Common myeloid progenitor, CD34-positive (primary cell): ENCODE measurements at regions of chr19 and their contacts with region 1.

Region 1: GRCh38 chr19:41563854-41564514 is 12.0 kb upstream of the CEACAM21 start:
- DNase-seq: peak in 2 of 3 donors; percentile 56 to 65
- H3K4me3 ChIP-seq: peak overlapping the region in 5 of 7 experiments; percentile 41 to 91 (median 77)
- H3K27ac ChIP-seq: no peak overlapping the region
- H3K4me1 ChIP-seq: peaks cover 3 to 45% (median 30%) of the 10 kb centered on the region in 4 experiments
- H3K27me3 ChIP-seq: peaks cover 0 to 6% (median 0%) of the 10 kb centered on the region in 5 experiments

Region 2: DNA sequence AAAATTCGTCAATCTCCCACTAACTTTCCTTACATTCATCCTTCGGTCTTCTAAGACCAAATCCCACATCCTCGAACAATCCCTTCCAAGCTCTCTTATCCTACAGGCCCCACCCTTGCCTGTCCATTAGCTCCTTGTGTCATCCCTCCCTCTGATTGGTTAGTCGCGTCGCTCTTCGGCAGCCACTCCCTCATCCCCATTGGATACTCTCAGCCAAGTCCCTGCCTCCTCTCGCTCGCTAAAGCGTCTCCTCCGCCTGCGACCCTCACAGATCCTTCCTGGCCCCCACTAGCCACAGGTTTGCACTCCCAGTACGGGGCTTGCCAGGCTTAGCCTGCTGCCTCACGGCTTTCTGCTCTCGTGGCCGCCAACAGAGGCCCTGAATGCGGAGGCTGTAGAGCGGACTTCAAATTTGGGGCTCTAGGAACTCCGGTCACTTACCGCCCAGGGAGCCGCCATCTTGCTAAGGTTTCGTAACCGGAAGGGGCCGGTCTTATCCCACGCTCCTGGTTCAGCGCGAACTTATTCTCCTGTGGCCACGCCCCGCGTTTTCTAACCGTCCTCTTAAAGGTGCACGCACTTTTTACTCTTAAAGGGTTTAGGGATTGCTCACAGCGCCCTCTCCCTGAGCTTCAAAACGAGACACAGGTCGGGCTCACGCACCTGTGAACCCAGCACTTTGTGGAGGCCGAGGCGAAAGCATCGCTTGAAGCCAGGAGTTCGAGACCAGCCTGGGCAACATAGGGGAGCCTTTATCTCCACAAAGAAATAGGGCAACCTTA is 124.4 kb before region 1 on chr19 and contains the start of gene DMAC2:
- CTCF ChIA-PET with region 1: interaction called, 113 read pairs
- POLR2A ChIA-PET with region 1: no interaction called
- DNase-seq: peak; percentile 97 to 98 (median 97)
- H3K4me3 ChIP-seq: peak within 1 kb of the TSS; percentile 71 to 100 (median 93)
- H3K27ac ChIP-seq: peak within 1 kb of the TSS; percentile 80 to 88
- H3K4me1 ChIP-seq: peaks cover 4 to 22% (median 13%) of the 10 kb centered on the region in 4 experiments
- H3K27me3 ChIP-seq: no peaks in the 10 kb centered on the region

Region 3: GRCh38 chr19:41449079-41449864 is 114.7 kb before region 1 on chr19:
- CTCF ChIA-PET with region 1: interaction called, 113 read pairs
- POLR2A ChIA-PET with region 1: no interaction called
- DNase-seq: peak; percentile 50 to 68 (median 65)
- H3K4me3 ChIP-seq: peak overlapping the region in 6 of 7 experiments; percentile 13 to 66 (median 42)
- H3K27ac ChIP-seq: no peak overlapping the region
- H3K4me1 ChIP-seq: peaks cover 3 to 13% (median 5%) of the 10 kb centered on the region in 4 experiments
- H3K27me3 ChIP-seq: peaks cover 0 to 5% (median 0%) of the 10 kb centered on the region in 5 experiments

Region 4: DNA sequence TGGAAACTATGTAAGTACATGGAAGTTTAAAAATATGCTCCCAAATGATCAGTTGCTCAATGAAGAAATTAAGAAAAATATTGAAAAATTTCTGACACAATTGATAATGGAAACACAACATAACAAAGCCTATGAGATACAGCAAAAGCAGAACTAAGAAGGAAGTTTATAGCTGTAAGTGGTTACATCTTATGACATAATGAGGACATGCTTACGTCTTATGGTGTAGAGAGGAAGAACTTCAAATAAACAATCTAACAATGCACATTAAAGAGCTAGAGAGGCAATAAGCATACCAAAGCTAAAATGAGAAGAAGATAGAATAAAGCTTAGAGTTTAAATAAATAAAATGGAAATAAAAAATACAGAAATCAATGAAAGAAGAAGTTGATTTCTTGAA is 38.0 kb before region 1 on chr19:
- CTCF ChIA-PET with region 1: interaction called, 43 read pairs
- POLR2A ChIA-PET with region 1: interaction called, 6 read pairs
- DNase-seq: peak in 1 of 3 donors; percentile 38
- H3K4me3 ChIP-seq: no peak overlapping the region
- H3K27ac ChIP-seq: no peak overlapping the region
- H3K4me1 ChIP-seq: peaks cover 16 to 48% (median 37%) of the 10 kb centered on the region in 4 experiments
- H3K27me3 ChIP-seq: no peaks in the 10 kb centered on the region

Region 5: DNA sequence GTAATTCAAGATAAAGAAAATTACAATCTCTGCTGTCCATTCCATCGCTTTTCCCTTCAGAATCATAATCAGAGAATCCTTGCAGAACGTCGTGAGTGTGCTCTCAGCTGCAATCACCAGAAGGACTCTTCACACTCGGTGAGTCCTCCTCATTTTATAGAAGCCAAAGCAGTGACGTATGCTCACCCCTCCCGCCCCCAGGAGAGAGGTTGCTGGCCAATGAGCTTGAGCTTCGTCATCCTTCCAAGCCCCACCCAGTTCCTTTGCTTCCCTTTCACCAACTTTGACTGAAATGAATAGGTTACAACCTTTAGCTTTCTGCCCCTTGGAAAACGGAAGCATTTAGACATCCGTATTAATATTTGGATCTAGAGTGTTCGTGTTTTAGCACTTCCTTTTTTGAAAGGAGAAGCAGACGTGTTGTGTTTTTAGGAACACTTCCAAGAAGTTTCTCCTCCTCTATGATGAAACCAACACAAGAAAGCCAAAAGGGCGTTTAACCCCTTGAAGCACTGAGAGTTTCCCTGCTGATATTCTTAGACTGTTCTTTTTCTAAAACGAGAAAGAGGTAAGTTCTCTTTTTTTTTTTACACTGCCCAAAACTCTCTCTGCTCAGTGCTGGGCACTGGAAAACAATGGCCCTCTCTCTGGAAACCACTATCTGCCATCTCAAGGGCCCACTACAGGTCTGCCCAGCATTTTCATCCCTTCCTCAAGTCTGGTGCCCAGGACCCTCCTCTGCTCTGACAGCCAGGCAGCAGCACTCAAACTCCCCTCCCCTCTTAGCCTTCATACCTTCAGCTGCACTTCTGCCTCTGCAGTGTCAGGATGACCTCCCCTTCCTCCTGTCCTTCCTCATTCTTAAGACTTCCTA is 32.3 kb before region 1 on chr19:
- CTCF ChIA-PET with region 1: interaction called, 43 read pairs
- POLR2A ChIA-PET with region 1: interaction called, 6 read pairs
- DNase-seq: peak; percentile 97 to 98 (median 98)
- H3K4me3 ChIP-seq: peak overlapping the region in 6 of 7 experiments; percentile 39 to 69 (median 60)
- H3K27ac ChIP-seq: peak overlapping the region in 1 of 2 experiments; percentile 79
- H3K4me1 ChIP-seq: peaks cover 45 to 77% (median 64%) of the 10 kb centered on the region in 4 experiments
- H3K27me3 ChIP-seq: no peaks in the 10 kb centered on the region

Region 6: DNA sequence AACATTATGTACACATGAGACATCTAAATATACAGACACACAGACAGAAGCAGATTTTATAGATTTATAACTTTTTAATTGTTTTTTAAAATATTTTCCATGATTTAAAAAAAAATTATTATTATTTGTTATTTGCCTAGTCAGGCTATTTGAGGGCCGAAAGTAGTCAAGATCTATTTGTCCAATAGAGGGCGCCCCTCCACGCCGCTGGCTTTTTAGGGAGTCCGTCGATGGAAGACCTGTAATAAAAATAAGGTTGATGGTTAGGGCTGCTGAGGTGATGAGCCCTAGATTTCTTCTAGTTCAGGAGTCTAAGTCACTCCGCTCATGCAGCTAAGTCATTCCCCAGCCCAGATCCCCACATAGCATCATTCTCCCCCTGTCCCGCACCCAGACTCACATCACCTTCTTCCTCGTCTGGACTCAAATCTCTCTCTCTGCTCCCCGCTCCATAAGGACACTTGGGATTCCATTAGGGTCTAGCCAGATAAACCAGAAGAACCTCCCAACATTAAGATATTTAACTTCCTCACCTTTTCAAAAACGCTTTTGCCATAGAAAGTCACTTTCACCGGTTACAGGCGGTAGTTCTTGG is 21.9 kb before region 1 on chr19:
- CTCF ChIA-PET with region 1: interaction called, 110 read pairs
- POLR2A ChIA-PET with region 1: no interaction called
- DNase-seq: peak; percentile 75 to 83 (median 82)
- H3K4me3 ChIP-seq: peak overlapping the region in 1 of 7 experiments; percentile 43
- H3K27ac ChIP-seq: no peak overlapping the region
- H3K4me1 ChIP-seq: peaks cover 12 to 47% (median 35%) of the 10 kb centered on the region in 4 experiments
- H3K27me3 ChIP-seq: no peaks in the 10 kb centered on the region

Region 7: GRCh38 chr19:41548954-41549688 is 14.9 kb before region 1 on chr19:
- CTCF ChIA-PET with region 1: interaction called, 110 read pairs
- POLR2A ChIA-PET with region 1: interaction called, 9 read pairs
- DNase-seq: peak; percentile 86 to 99 (median 97)
- H3K4me3 ChIP-seq: peak overlapping the region in 6 of 7 experiments; percentile 67 to 91 (median 76)
- H3K27ac ChIP-seq: peak overlapping the region; percentile 68 to 82
- H3K4me1 ChIP-seq: peaks cover 49 to 88% (median 77%) of the 10 kb centered on the region in 4 experiments
- H3K27me3 ChIP-seq: no peaks in the 10 kb centered on the region